Naive thymus-derived CD4-positive, alpha-beta T cell (primary cell): ENCODE measurements at regions of chr4 and their contacts with region 1.

Region 1: GRCh38 chr4:82900331-82901128 is at the start of gene THAP9:
- DNase-seq: peak; percentile 92 to 100 (median 98)
- ATAC-seq: peak; percentile 91
- H3K4me3 ChIP-seq: peak within 1 kb of the TSS; percentile 91
- H3K4me3 Mint-ChIP-seq: no peak within 1 kb of the TSS
- H3K27ac ChIP-seq: peak within 1 kb of the TSS; percentile 98
- H3K27ac Mint-ChIP-seq: no peak within 1 kb of the TSS
- H3K4me1 ChIP-seq: peaks cover 13 to 15% of the 10 kb centered on the region in 2 donors
- H3K4me1 Mint-ChIP-seq: peaks cover 0 to 30% (median 15%) of the 10 kb centered on the region in 7 donors
- H3K27me3 ChIP-seq: no peaks in the 10 kb centered on the region
- H3K27me3 Mint-ChIP-seq: peaks cover 0 to 2% (median 0%) of the 10 kb centered on the region in 5 donors
- total RNA-seq, gene THAP9: 2.2 to 4.9 (median 4.4) TPM

Region 2: DNA sequence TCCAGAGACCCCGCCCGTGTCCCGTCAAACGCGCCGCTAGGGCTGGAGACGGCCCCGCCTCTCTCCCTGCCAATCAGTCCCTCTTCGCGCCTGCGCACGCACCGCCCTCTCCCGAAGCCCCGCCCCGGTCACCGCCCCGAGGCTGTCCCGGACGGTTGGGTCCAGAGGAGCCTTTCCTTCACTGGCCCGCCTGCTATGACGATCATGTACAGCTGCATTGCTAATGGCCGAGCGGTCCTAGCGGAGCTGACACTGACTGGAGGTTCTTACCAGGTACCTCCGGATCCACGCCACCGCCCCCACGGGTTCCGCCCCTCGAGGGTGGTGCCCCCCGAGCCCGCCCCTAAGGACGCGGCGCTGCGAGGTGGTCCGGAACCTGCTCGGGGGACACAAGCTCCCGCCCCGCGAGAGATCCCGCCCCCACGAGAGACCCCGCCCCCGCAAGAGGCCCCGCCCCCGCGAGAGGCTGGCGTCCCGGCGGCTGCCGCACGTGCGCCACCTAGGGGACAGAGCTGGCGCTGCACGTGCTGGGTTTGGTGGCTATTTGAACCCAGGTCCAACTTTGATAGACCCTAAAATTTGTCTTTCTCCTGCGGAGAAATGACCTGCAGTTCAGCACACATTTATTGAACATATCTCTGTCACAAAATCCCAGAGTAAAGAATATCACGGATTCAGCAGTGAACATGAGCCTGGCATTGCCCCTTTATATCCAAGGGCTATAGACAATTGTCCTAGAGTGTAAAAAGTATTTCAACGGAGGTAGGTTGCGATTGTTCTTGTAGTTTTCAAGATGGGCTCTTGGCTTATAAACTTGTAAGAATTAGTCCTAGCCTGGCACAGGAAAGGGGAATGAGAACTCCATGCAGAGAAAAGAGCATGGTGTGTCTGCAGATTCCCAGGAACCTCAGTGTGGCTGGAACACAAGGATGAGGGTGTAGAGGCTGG is 615.4 kb before region 1 on chr4:
- CTCF ChIA-PET with region 1: no interaction called
- POLR2A ChIA-PET with region 1: no interaction called
- intact Hi-C with region 1: loop called (anchors 1 kb)
- DNase-seq: peak; percentile 97 to 100 (median 99)
- ATAC-seq: peak; percentile 94
- H3K4me3 ChIP-seq: peak overlapping the region; percentile 55
- H3K4me3 Mint-ChIP-seq: peak overlapping the region; percentile 70 to 91 (median 86)
- H3K27ac ChIP-seq: peak overlapping the region; percentile 71
- H3K27ac Mint-ChIP-seq: peak overlapping the region; percentile 53 to 94 (median 83)
- H3K4me1 ChIP-seq: peaks cover 4 to 11% of the 10 kb centered on the region in 2 donors
- H3K4me1 Mint-ChIP-seq: peaks cover 9 to 22% (median 13%) of the 10 kb centered on the region in 7 donors
- H3K27me3 ChIP-seq: no peaks in the 10 kb centered on the region
- H3K27me3 Mint-ChIP-seq: peaks cover 0 to 28% (median 0%) of the 10 kb centered on the region in 5 donors

Region 3: GRCh38 chr4:82851885-82852750 is 48.4 kb before region 1 on chr4:
- CTCF ChIA-PET with region 1: interaction called, 11 read pairs
- POLR2A ChIA-PET with region 1: interaction called, 3 read pairs
- intact Hi-C with region 1: loop called (anchors 1 kb)
- DNase-seq: peak in 6 of 9 donors; percentile 20 to 38 (median 32)
- ATAC-seq: peak; percentile 58
- H3K4me3 ChIP-seq: no peak overlapping the region
- H3K4me3 Mint-ChIP-seq: no peak overlapping the region
- H3K27ac ChIP-seq: no peak overlapping the region
- H3K27ac Mint-ChIP-seq: peak overlapping the region in 4 of 9 donors; percentile 21 to 47 (median 30)
- H3K4me1 ChIP-seq: no peaks in the 10 kb centered on the region
- H3K4me1 Mint-ChIP-seq: peaks cover 0 to 17% (median 3%) of the 10 kb centered on the region in 7 donors
- H3K27me3 ChIP-seq: no peaks in the 10 kb centered on the region
- H3K27me3 Mint-ChIP-seq: no peaks in the 10 kb centered on the region

Region 4: GRCh38 chr4:83034630-83035494 is 134.3 kb after region 1 on chr4 and contains the start of gene COPS4:
- CTCF ChIA-PET with region 1: interaction called, 5 read pairs
- POLR2A ChIA-PET with region 1: interaction called, 14 read pairs
- intact Hi-C with region 1: loop called (anchors 1 kb)
- DNase-seq: peak; percentile 77 to 98 (median 97)
- ATAC-seq: peak; percentile 99
- H3K4me3 ChIP-seq: peak within 1 kb of the TSS; percentile 98
- H3K4me3 Mint-ChIP-seq: peak within 1 kb of the TSS; percentile 92 to 100 (median 98)
- H3K27ac ChIP-seq: peak within 1 kb of the TSS; percentile 94
- H3K27ac Mint-ChIP-seq: peak within 1 kb of the TSS; percentile 94 to 100 (median 97)
- H3K4me1 ChIP-seq: peaks cover 4 to 19% of the 10 kb centered on the region in 2 donors
- H3K4me1 Mint-ChIP-seq: peaks cover 19 to 44% (median 35%) of the 10 kb centered on the region in 7 donors
- H3K27me3 ChIP-seq: no peaks in the 10 kb centered on the region
- H3K27me3 Mint-ChIP-seq: no peaks in the 10 kb centered on the region
- total RNA-seq, gene COPS4: 23.5 to 32.8 (median 24.7) TPM

Region 5: GRCh38 chr4:83535520-83536361 is 635.2 kb after region 1 on chr4 and contains the start of gene GPAT3:
- CTCF ChIA-PET with region 1: no interaction called
- POLR2A ChIA-PET with region 1: no interaction called
- intact Hi-C with region 1: loop called in 1 of 2 experiments (anchors 5 kb)
- DNase-seq: peak; percentile 37 to 76 (median 58)
- ATAC-seq: peak; percentile 89
- H3K4me3 ChIP-seq: peak within 1 kb of the TSS; percentile 80
- H3K4me3 Mint-ChIP-seq: peak within 1 kb of the TSS; percentile 87 to 97 (median 90)
- H3K27ac ChIP-seq: peak within 1 kb of the TSS; percentile 56
- H3K27ac Mint-ChIP-seq: peak within 1 kb of the TSS; percentile 24 to 92 (median 73)
- H3K4me1 ChIP-seq: peaks cover 0 to 8% of the 10 kb centered on the region in 2 donors
- H3K4me1 Mint-ChIP-seq: peaks cover 13 to 37% (median 17%) of the 10 kb centered on the region in 7 donors
- H3K27me3 ChIP-seq: no peaks in the 10 kb centered on the region
- H3K27me3 Mint-ChIP-seq: peaks cover 0 to 59% (median 20%) of the 10 kb centered on the region in 5 donors
- total RNA-seq, gene GPAT3: 3.0 to 14.6 (median 5.8) TPM

Region 6: GRCh38 chr4:83922402-83922801 is 1021.9 kb after region 1 on chr4:
- CTCF ChIA-PET with region 1: no interaction called
- POLR2A ChIA-PET with region 1: no interaction called
- intact Hi-C with region 1: no loop called
- DNase-seq: no peak
- ATAC-seq: no peak
- H3K4me3 ChIP-seq: no peak overlapping the region
- H3K4me3 Mint-ChIP-seq: no peak overlapping the region
- H3K27ac ChIP-seq: no peak overlapping the region
- H3K27ac Mint-ChIP-seq: no peak overlapping the region
- H3K4me1 ChIP-seq: no peaks in the 10 kb centered on the region
- H3K4me1 Mint-ChIP-seq: no peaks in the 10 kb centered on the region
- H3K27me3 ChIP-seq: no peaks in the 10 kb centered on the region
- H3K27me3 Mint-ChIP-seq: peaks cover 0 to 7% (median 0%) of the 10 kb centered on the region in 5 donors